ENCODE measurements at regions of chr14 and their contacts with region 1.

Region 1: DNA sequence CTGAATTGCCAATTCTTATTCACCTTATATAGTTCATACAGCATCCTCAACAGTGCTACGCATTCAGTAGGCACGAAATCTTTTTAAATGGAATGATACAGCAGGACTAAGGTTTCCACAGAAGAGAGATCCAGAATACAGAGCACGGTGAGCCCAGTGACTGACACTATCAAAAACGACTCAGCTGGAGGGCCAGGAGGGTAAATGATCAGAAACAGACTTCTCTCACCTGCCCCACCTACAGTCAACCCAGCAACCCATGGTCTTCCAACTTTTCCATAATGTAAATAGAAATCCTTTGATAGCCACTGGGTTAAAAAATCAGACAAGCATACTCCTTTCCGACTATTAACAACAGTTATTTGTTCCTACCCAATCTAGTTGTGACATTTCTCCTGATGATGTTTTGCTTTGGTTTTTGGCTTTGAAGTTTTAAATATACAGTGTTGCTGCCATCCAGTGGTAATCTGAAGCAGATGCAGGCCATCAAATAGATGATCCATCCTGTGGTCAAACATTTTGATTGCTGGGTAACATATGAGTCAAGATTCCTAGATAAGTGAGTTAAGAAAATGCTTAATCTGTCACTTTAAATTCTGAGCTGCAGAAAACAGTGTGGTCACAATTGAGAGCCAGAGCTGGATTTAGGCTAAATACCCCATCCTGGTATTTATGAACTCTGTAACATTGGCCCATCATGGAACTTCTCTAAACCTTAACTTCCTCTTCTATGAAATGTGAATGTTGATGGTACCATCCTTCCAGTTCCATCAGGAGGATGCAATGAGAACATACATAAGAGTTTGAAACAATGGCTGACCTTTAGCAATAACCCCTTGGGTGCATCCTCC is 42.0 kb downstream of the GPHB5 start:
- DNase-seq: peak; percentile 7
- ATAC-seq: peak; percentile 69
- H3K4me3 Mint-ChIP-seq: no peak overlapping the region
- H3K27ac Mint-ChIP-seq: no peak overlapping the region
- H3K4me1 Mint-ChIP-seq: no peaks in the 10 kb centered on the region
- H3K27me3 Mint-ChIP-seq: no peaks in the 10 kb centered on the region
- CTCF ChIP-seq: peak; percentile 66

Region 2: DNA sequence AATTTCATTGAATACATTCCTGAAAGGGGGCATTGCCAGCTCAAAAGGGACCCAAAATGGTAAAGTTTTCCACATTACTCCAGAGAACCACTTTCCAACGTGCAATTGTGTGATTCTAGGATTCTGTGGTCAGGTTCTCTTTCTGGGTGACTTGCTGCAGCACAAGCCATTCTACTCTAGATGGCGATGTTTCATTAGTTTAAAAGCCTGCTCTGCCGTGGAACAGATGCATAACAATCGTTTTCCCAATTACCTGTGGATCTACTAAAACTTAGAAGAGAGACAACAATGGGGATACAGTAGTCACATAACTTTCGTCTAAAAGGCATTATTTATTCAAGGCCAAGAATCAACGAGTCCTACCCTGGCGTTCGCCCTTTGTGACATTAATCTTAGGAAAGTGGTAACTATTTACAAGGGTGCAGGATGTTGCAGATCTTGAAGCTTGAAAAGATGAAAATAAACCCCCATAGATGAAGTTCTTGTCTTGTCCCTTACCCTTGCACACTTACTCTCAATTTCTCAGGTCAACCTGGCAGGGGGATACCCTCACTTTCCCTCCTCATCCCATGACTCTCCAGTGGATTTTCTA is 1113.6 kb before region 1 on chr14:
- CTCF ChIA-PET with region 1: no interaction called
- POLR2A ChIA-PET with region 1: no interaction called
- intact Hi-C with region 1: loop called (anchors 10 kb)
- DNase-seq: peak; percentile 5
- ATAC-seq: no peak
- H3K4me3 Mint-ChIP-seq: no peak overlapping the region
- H3K27ac Mint-ChIP-seq: no peak overlapping the region
- H3K4me1 Mint-ChIP-seq: no peaks in the 10 kb centered on the region
- H3K27me3 Mint-ChIP-seq: peaks cover 23% of the 10 kb centered on the region
- CTCF ChIP-seq: peak; percentile 74

Region 3: GRCh38 chr14:62179367-62180018 is 1097.2 kb before region 1 on chr14:
- CTCF ChIA-PET with region 1: interaction called, 11 read pairs
- POLR2A ChIA-PET with region 1: no interaction called
- intact Hi-C with region 1: no loop called
- DNase-seq: peak; percentile 64
- ATAC-seq: peak; percentile 45
- H3K4me3 Mint-ChIP-seq: no peak overlapping the region
- H3K27ac Mint-ChIP-seq: no peak overlapping the region
- H3K4me1 Mint-ChIP-seq: no peaks in the 10 kb centered on the region
- H3K27me3 Mint-ChIP-seq: peaks cover 16% of the 10 kb centered on the region
- CTCF ChIP-seq: peak; percentile 46

Region 4: GRCh38 chr14:63174760-63175211 is 101.9 kb before region 1 on chr14:
- CTCF ChIA-PET with region 1: interaction called, 3 read pairs
- POLR2A ChIA-PET with region 1: no interaction called
- intact Hi-C with region 1: loop called (anchors 10 kb)
- DNase-seq: no peak
- ATAC-seq: no peak
- H3K4me3 Mint-ChIP-seq: no peak overlapping the region
- H3K27ac Mint-ChIP-seq: no peak overlapping the region
- H3K4me1 Mint-ChIP-seq: no peaks in the 10 kb centered on the region
- H3K27me3 Mint-ChIP-seq: peaks cover 4% of the 10 kb centered on the region
- CTCF ChIP-seq: peak; percentile 27

Region 5: GRCh38 chr14:63301891-63302534 is 25.3 kb after region 1 on chr14:
- CTCF ChIA-PET with region 1: no interaction called
- POLR2A ChIA-PET with region 1: no interaction called
- intact Hi-C with region 1: no loop called
- DNase-seq: no peak
- ATAC-seq: no peak
- H3K4me3 Mint-ChIP-seq: no peak overlapping the region
- H3K27ac Mint-ChIP-seq: no peak overlapping the region
- H3K4me1 Mint-ChIP-seq: no peaks in the 10 kb centered on the region
- H3K27me3 Mint-ChIP-seq: peaks cover 10% of the 10 kb centered on the region
- CTCF ChIP-seq: no peak

Measured in activated CD8-positive, alpha-beta T cell treated with anti-CD3 and anti-CD28 coated beads for 36 hours (primary cell).